ENCODE measurements at regions of chr6 and their contacts with region 1.

Region 1: GRCh38 chr6:167350731-167351655 is 26.1 kb downstream of the TTLL2 start:
- H3K4me3 ChIP-seq: peak overlapping the region; percentile 45
- H3K27ac ChIP-seq: no peak overlapping the region; the same call in 1 of the 2 replicates
- H3K4me1 ChIP-seq: no peaks in the 10 kb centered on the region
- CTCF ChIP-seq: peak; percentile 77

Region 2: GRCh38 chr6:167229586-167229985 is 121.4 kb before region 1 on chr6:
- CTCF ChIA-PET with region 1: interaction called, 11 read pairs
- POLR2A ChIA-PET with region 1: no interaction called
- H3K4me3 ChIP-seq: no peak overlapping the region
- H3K27ac ChIP-seq: no peak overlapping the region
- H3K4me1 ChIP-seq: no peaks in the 10 kb centered on the region
- CTCF ChIP-seq: no peak

Region 3: GRCh38 chr6:167291623-167292300 is 59.2 kb before region 1 on chr6:
- CTCF ChIA-PET with region 1: interaction called, 25 read pairs
- POLR2A ChIA-PET with region 1: interaction called, 4 read pairs
- H3K4me3 ChIP-seq: no peak overlapping the region
- H3K27ac ChIP-seq: no peak overlapping the region
- H3K4me1 ChIP-seq: no peaks in the 10 kb centered on the region
- CTCF ChIP-seq: no peak

Region 4: DNA sequence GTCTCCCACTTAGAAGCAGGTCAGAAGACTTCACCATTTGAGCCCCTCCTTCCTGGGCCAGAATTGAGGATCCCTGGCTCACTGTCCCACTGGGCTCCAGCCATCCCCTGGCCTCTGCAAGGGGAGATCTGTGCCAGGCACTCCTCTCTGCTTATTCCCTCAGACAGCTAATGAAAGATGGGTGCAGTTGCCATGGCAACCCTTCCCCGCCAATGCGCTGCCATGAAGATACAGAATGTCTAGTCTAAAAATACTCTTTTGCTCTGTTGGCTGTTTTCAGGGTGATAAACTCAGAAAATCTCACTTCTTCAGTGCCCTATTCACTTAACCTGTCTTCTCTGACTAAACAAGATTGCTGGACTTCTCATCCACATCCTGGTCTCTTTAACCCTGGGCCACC is 39.7 kb before region 1 on chr6:
- CTCF ChIA-PET with region 1: interaction called, 10 read pairs
- POLR2A ChIA-PET with region 1: no interaction called
- H3K4me3 ChIP-seq: no peak overlapping the region
- H3K27ac ChIP-seq: no peak overlapping the region
- H3K4me1 ChIP-seq: no peaks in the 10 kb centered on the region
- CTCF ChIP-seq: no peak

Region 5: DNA sequence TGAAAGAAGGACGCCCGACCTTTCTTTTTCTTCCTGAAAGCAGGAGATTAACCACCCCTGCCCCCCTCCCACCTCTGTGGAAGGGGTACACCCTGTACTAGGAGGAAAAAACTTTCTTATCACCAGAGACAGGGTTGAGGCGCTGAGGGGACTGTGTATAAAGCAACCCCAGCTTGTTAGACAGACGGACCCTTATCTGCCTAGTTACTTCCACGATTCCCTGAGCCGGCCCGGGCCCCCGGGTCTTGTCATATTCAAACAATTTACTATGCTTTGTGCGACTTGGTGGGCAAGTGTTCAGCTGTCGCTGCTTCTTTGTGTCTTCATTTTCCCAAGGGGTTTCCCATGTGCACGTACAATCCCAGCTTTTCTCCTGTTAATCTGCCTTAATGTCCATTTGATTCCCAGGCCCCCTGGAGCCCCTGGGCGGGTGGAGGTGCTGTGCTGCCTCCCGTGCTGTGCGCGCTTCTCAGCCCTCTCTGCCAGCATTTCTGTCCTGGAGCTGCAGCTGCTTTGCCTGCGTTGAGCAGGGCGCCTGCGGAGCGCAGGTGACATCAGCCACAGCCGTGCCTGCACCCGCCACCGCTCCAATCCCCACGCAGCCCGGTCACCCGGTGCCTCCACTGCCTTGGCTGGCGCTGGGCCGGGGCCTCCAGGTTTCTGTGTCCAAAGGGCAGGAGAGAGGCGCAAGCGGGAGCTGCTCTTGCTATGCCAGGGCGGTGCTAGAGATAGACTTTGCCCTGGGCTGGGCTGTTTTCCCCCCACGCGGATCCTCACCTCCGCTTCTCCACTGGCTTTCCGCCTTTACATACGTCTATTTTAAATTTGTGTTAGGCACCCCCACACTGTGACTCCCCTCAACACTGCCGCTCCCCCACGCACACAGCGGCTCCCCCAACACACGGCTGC is 70.1 kb after region 1 on chr6:
- CTCF ChIA-PET with region 1: no interaction called
- POLR2A ChIA-PET with region 1: no interaction called
- H3K4me3 ChIP-seq: no peak overlapping the region
- H3K27ac ChIP-seq: no peak overlapping the region
- H3K4me1 ChIP-seq: no peaks in the 10 kb centered on the region
- CTCF ChIP-seq: no peak

Measured in HEK293 (cell line).